ENCODE measurements at regions of chr4 and their contacts with region 1.

Region 1: DNA sequence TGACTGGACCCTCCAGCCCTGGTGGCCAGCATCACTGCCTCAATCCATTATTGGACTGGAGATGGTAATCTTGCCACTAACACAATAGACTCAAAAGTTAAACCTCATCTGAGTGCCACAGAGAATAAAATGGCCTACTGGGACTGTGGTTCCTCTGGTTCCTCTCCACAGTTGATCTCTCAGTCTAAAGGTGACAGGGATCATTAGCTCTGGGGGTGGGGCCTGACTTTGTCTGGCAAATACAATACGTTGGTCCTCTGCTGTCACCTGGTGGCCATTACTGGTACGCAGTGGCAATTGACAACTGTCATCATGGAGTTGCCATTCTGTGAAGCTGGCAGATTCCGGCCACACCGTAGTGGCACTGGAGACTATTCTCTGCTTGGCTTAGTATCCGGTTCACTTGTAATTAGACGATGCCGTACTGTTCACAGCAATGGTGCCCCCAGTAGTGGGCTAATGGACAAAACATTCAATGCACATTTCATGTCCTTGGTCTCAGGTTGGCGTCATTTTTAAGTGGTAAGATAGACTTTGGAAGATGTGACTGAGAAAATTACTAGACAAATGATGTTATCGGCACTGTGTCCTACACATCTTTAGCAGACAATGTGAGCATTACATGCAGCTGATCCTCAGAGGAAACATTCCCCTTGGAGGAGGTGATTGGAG is 6.7 kb downstream of the FGFBP2 start:
- DNase-seq: no peak
- H3K4me3 ChIP-seq: no peak overlapping the region
- H3K27ac ChIP-seq: no peak overlapping the region
- H3K4me1 ChIP-seq: peaks cover 0 to 7% (median 3%) of the 10 kb centered on the region in 4 donors
- H3K27me3 ChIP-seq: no peaks in the 10 kb centered on the region
- CTCF ChIP-seq: peak; percentile 88 to 92 (median 89)
- EP300 ChIP-seq: no peak
- POLR2A ChIP-seq: no peak

Region 2: GRCh38 chr4:15805583-15806517 is 150.5 kb before region 1 on chr4:
- intact Hi-C with region 1: loop called (anchors 1 kb)
- DNase-seq: no peak
- H3K4me3 ChIP-seq: no peak overlapping the region
- H3K27ac ChIP-seq: no peak overlapping the region
- H3K4me1 ChIP-seq: peaks cover 0 to 9% (median 6%) of the 10 kb centered on the region in 4 donors
- H3K27me3 ChIP-seq: no peaks in the 10 kb centered on the region
- CTCF ChIP-seq: peak; percentile 65 to 73 (median 73)
- EP300 ChIP-seq: no peak
- POLR2A ChIP-seq: no peak

Region 3: GRCh38 chr4:15882675-15883086 is 73.6 kb before region 1 on chr4:
- intact Hi-C with region 1: loop called (anchors 1 kb)
- DNase-seq: no peak
- H3K4me3 ChIP-seq: no peak overlapping the region
- H3K27ac ChIP-seq: no peak overlapping the region
- H3K4me1 ChIP-seq: peaks cover 0 to 16% (median 6%) of the 10 kb centered on the region in 4 donors
- H3K27me3 ChIP-seq: no peaks in the 10 kb centered on the region
- CTCF ChIP-seq: peak; percentile 85 to 95 (median 86)
- EP300 ChIP-seq: no peak
- POLR2A ChIP-seq: no peak

Region 4: DNA sequence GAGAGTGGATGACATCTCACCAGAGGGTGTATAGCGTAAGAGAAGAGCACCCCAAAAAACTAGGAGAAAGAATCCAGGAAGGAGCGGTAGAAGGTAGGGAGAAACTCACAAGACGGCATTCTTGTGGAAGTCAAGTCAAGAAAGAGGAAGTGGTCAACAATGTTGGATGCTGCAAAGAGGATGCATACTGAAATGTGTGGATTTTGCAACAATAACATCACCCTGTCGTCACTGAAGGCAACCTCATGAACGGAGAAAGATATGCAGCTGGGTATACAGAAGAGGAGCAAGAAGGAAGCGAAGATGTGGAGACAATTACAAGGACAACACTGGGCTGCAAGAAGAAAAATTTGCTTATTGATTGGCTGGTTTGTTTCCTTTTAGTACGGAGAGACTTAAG is 281.4 kb after region 1 on chr4:
- intact Hi-C with region 1: no loop called
- DNase-seq: no peak
- H3K4me3 ChIP-seq: no peak overlapping the region
- H3K27ac ChIP-seq: no peak overlapping the region
- H3K4me1 ChIP-seq: peaks cover 0 to 1% (median under 1%) of the 10 kb centered on the region in 4 donors
- H3K27me3 ChIP-seq: no peaks in the 10 kb centered on the region
- CTCF ChIP-seq: no peak
- EP300 ChIP-seq: no peak
- POLR2A ChIP-seq: no peak

Region 5: GRCh38 chr4:17347445-17347844 is 1391.1 kb after region 1 on chr4:
- intact Hi-C with region 1: no loop called
- DNase-seq: peak; percentile 8
- H3K4me3 ChIP-seq: no peak overlapping the region
- H3K27ac ChIP-seq: no peak overlapping the region
- H3K4me1 ChIP-seq: no peaks in the 10 kb centered on the region
- H3K27me3 ChIP-seq: no peaks in the 10 kb centered on the region
- CTCF ChIP-seq: peak; percentile 51 to 57 (median 54)
- EP300 ChIP-seq: no peak
- POLR2A ChIP-seq: no peak